ENCODE measurements at regions of chr4 and their contacts with region 1.

Region 1: DNA sequence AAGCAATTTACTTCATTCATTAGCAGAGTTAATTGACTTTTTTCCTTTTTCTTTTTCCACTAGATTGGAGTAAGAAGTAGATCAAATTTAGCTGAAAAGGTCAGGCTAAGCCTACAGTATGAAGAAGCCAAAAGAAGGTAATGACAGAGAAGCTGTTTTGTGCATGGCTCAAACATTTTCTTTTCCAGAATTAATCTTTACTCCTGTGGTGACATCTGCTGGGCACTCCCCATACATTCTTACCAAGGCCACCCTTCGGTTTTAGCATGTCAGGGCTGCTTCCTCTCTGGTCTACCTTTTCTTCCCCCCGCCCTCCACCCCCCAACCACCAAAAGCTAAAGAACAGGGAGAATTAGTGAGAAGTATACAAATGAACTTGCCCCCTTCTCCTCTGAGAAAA is 70.2 kb downstream of the CLDN22 start:
- DNase-seq: peak in 4 of 7 donors; percentile 19 to 50 (median 36)
- H3K4me3 ChIP-seq: no peak overlapping the region
- H3K27ac ChIP-seq: no peak overlapping the region
- H3K4me1 ChIP-seq: no peaks in the 10 kb centered on the region
- H3K27me3 ChIP-seq: no peaks in the 10 kb centered on the region
- CTCF ChIP-seq: peak in 5 of 6 experiments; percentile 42 to 55 (median 47)
- POLR2A ChIP-seq: no peak

Region 2: GRCh38 chr4:183074296-183074990 is 175.4 kb before region 1 on chr4:
- intact Hi-C with region 1: loop called (anchors 2 to 5 kb)
- DNase-seq: no peak
- H3K4me3 ChIP-seq: no peak overlapping the region
- H3K27ac ChIP-seq: no peak overlapping the region
- H3K4me1 ChIP-seq: no peaks in the 10 kb centered on the region
- H3K27me3 ChIP-seq: no peaks in the 10 kb centered on the region
- CTCF ChIP-seq: no peak
- POLR2A ChIP-seq: no peak

Region 3: GRCh38 chr4:184228056-184228705 is 978.3 kb after region 1 on chr4:
- intact Hi-C with region 1: no loop called
- DNase-seq: no peak
- H3K4me3 ChIP-seq: no peak overlapping the region
- H3K27ac ChIP-seq: no peak overlapping the region
- H3K4me1 ChIP-seq: no peaks in the 10 kb centered on the region
- H3K27me3 ChIP-seq: no peaks in the 10 kb centered on the region
- CTCF ChIP-seq: no peak
- POLR2A ChIP-seq: no peak